K562 (cell line): ENCODE measurements at regions of chr6 and their contacts with region 1.

Region 1: GRCh38 chr6:149473080-149474052 is 11.4 kb downstream of the ZC3H12D start:
- DNase-seq: peak in 1 of 4 experiments; percentile 2
- ATAC-seq: 0 out of 3 replicates have a peak, but pooled peaks have one; percentile 36
- H3K4me3 ChIP-seq: no peak overlapping the region
- H3K27ac ChIP-seq: no peak overlapping the region
- H3K4me1 ChIP-seq: peaks cover 0 to 7% of the 10 kb centered on the region in 2 experiments; a peak in 1 of 5 replicates
- H3K27me3 ChIP-seq: peaks cover 63 to 84% of the 10 kb centered on the region in 2 experiments
- CTCF ChIP-seq: no peak
- EP300 ChIP-seq: no peak
- POLR2A ChIP-seq: no peak
- RAD21 ChIP-seq: no peak

Region 2: DNA sequence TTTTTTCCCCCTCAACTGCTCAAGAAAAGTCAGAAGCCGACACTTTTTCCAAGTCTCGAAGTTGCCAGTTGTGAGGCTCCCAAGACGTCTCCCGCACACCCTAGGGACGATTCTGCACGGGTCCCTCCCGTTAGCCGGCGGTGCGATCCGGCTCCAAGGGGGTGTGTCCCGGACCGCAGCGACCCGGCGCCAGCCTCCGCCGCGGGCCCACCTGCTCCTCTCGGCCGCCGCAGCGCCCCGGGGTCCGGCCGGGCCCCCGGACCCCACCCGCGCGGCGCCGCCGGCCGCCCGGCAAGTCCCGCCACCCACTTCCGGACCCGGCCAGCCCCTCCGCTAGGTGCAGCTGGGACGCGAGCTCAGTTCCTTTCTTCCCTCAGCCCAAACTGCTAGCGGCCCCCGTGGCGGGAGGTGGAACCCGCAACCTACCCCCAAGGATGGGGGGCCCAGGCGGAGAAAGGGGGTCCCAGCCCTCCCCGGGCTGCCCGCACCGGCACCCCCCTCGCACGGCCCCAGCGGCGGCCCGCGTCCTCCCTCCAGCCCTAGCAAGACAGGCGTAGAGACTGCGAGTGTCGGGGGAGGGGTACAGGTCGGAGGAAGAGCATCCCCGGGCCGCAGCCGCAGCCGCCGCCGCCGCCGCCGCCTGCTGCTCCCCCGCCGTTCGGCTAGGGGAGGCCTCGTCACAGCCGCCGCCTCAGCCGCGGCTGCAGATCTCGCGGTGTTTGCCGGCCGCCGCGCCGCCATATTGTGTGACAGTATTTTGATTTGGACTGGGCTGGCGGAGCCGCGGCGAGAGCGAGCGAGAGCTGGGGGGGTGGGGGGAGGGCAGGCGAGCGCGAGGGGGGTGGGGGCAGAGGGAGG is 156.3 kb before region 1 on chr6:
- CTCF ChIA-PET with region 1: no interaction called
- POLR2A ChIA-PET with region 1: no interaction called
- in situ Hi-C with region 1: no loop called
- intact Hi-C with region 1: no loop called
- DNase-seq: peak; percentile 89 to 97 (median 90)
- ATAC-seq: peak; percentile 92
- H3K4me3 ChIP-seq: peak overlapping the region; percentile 89
- H3K27ac ChIP-seq: peak overlapping the region; percentile 88
- H3K4me1 ChIP-seq: peaks cover 9 to 12% of the 10 kb centered on the region in 2 experiments
- H3K27me3 ChIP-seq: no peaks in the 10 kb centered on the region
- CTCF ChIP-seq: peak in 2 of 3 experiments; percentile 24 to 29; a peak in 3 of 6 replicates
- EP300 ChIP-seq: peak; percentile 5; the same call in 1 of the 2 replicates
- POLR2A ChIP-seq: peak; percentile 89
- RAD21 ChIP-seq: peak; percentile 31 to 44

Region 3: GRCh38 chr6:149488815-149489214 is 15.4 kb after region 1 on chr6:
- CTCF ChIA-PET with region 1: no interaction called
- POLR2A ChIA-PET with region 1: interaction called, 10 read pairs
- in situ Hi-C with region 1: no loop called
- intact Hi-C with region 1: no loop called
- DNase-seq: no peak
- ATAC-seq: no peak
- H3K4me3 ChIP-seq: no peak overlapping the region
- H3K27ac ChIP-seq: no peak overlapping the region
- H3K4me1 ChIP-seq: peaks cover 3 to 10% of the 10 kb centered on the region in 2 experiments; a peak in 3 of 5 replicates
- H3K27me3 ChIP-seq: peaks cover 47 to 78% of the 10 kb centered on the region in 2 experiments
- CTCF ChIP-seq: no peak
- EP300 ChIP-seq: no peak
- POLR2A ChIP-seq: no peak
- RAD21 ChIP-seq: no peak